Mammary epithelial cell (primary cell): ENCODE measurements at regions of chr1 and their contacts with region 1.

Region 1: DNA sequence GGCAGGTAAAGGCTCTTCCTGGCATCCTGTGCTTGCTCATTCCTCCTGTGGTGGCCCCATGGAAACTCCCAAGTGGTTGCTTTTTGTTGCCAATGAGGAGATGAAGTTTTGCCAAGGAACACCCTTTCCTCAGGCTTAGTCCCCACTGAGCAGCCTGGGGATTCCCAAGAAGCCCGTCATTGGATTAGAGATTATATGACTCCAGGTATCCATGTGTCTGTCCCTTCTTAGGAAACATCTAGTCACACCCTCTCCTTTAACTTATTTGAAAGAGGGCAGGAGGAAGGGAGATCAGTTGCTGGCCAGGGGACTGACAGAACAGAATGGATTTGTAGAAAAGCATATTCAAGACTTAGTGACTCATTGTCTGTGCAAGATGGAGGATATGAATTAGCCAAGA is 3.8 kb upstream of the LCE3A start:
- DNase-seq: peak; percentile 74
- H3K4me3 ChIP-seq: no peak overlapping the region
- H3K27ac ChIP-seq: no peak overlapping the region
- H3K4me1 ChIP-seq: no peaks in the 10 kb centered on the region
- H3K27me3 ChIP-seq: no peaks in the 10 kb centered on the region
- CTCF ChIP-seq: no peak

Region 2: GRCh38 chr1:152582647-152583046 is 44.1 kb before region 1 on chr1:
- CTCF ChIA-PET with region 1: no interaction called
- dilution Hi-C with region 1: no loop called
- in situ Hi-C with region 1: loop called in 1 of 2 experiments (anchors 5 kb)
- intact Hi-C with region 1: no loop called
- DNase-seq: peak; percentile 80
- H3K4me3 ChIP-seq: no peak overlapping the region
- H3K27ac ChIP-seq: no peak overlapping the region
- H3K4me1 ChIP-seq: peaks cover 8% of the 10 kb centered on the region
- H3K27me3 ChIP-seq: no peaks in the 10 kb centered on the region
- CTCF ChIP-seq: no peak

Region 3: DNA sequence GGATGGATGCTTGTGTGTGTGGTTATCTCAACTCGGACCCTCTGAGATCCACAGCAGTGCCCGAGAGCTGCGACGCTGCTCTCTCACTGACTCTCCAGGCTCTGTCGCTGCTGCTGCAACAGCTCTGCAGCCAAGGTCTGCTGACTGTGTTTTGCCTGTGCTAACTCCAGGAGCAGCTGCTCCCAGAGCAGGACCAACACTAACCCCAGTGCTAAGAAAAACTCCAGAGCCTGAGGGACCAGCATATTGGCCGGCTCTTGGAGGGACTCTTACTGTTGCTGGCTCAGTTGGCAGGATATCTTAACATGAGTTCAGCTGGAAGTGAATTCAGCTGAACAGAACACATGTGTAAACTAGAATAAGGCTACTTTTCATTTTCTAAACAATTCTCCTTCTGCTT is 52.7 kb after region 1 on chr1:
- CTCF ChIA-PET with region 1: no interaction called
- dilution Hi-C with region 1: no loop called
- in situ Hi-C with region 1: no loop called
- intact Hi-C with region 1: no loop called
- DNase-seq: no peak
- H3K4me3 ChIP-seq: no peak overlapping the region
- H3K27ac ChIP-seq: no peak overlapping the region
- H3K4me1 ChIP-seq: no peaks in the 10 kb centered on the region
- H3K27me3 ChIP-seq: peaks cover 10% of the 10 kb centered on the region
- CTCF ChIP-seq: no peak

Region 4: GRCh38 chr1:152996633-152997400 is 370.1 kb after region 1 on chr1:
- CTCF ChIA-PET with region 1: no interaction called
- dilution Hi-C with region 1: no loop called
- in situ Hi-C with region 1: no loop called
- intact Hi-C with region 1: no loop called
- DNase-seq: no peak
- H3K4me3 ChIP-seq: no peak overlapping the region
- H3K27ac ChIP-seq: no peak overlapping the region
- H3K4me1 ChIP-seq: peaks cover 9% of the 10 kb centered on the region
- H3K27me3 ChIP-seq: no peaks in the 10 kb centered on the region
- CTCF ChIP-seq: no peak